MCF 10A (cell line): ENCODE measurements at regions of chr14 and their contacts with region 1.

Region 1: DNA sequence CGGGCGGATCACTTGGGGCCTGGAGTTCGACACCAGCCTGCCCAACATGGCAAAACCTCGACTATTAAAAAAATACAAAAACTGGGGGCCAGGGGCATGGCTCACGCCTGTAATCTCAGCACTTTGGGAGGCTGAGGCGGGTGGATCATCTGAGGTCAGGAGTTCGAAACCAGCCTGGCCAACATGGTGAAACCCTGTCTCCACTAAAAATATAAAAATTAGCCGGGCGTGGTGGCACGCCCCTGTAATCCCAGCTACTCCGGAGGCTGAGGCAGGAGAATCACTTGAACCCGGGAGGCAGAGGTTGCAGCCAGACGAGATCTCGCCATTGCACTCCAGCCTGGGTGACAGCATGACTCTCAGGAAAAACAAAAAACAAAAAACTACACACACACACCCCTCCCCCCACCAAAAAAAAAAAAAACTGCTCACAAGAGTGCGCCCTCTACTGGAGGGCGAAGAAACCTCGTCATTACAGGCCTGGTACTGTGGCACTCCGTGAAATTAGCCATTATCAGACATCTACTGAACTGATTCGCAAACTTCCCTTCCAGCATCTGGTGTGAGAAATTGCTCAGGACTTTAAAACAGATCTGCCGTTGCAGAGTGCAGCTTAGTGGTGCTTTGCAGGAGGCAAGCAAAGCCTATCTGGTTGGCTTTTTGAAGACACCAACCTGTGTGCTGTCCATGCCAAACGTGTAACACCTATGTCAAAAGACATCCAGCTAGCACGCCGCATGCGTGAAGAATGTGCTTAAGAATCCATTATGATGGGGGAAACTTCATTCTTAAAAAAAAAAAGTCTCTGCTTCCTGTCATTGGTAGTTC is 7.7 kb downstream of the PPP1R3E start:
- DNase-seq: peak; percentile 63
- H3K4me3 Mint-ChIP-seq: no peak overlapping the region
- H3K27ac Mint-ChIP-seq: no peak overlapping the region
- H3K4me1 Mint-ChIP-seq: peaks cover 17% of the 10 kb centered on the region
- H3K27me3 Mint-ChIP-seq: no peaks in the 10 kb centered on the region
- CTCF ChIP-seq: peak; percentile 72

Region 2: DNA sequence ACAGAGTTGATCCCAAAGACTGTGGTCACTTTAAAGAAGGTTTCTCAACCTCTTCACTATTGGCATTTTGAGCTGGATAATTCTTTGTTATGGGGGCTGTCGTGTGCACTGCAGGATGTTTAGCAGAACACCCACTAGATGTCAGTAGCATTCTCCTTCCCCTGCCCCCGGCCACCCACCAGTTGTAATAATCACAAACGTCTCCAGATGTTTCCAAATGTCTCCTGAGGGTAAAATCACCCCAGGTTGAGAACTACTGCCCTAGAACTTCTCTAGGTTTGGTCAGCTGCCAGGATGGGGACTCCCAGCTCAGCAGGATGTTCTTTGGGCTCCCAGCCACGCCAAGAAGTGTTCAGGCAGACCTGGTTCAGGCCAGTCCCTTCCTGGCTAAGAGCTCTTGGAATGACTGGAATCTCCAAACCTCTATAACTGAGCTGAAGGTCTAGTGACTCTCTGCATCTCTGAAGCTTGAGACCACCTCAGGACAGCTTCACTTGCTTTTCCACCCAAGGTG is 300.1 kb before region 1 on chr14:
- CTCF ChIA-PET with region 1: no interaction called
- POLR2A ChIA-PET with region 1: no interaction called
- intact Hi-C with region 1: no loop called
- DNase-seq: peak; percentile 84
- H3K4me3 Mint-ChIP-seq: no peak overlapping the region
- H3K27ac Mint-ChIP-seq: no peak overlapping the region
- H3K4me1 Mint-ChIP-seq: peaks cover 16% of the 10 kb centered on the region
- H3K27me3 Mint-ChIP-seq: no peaks in the 10 kb centered on the region
- CTCF ChIP-seq: peak; percentile 44

Region 3: GRCh38 chr14:23034483-23035302 is 260.3 kb before region 1 on chr14 and contains the start of gene PSMB5:
- CTCF ChIA-PET with region 1: no interaction called
- POLR2A ChIA-PET with region 1: no interaction called
- intact Hi-C with region 1: no loop called
- DNase-seq: peak; percentile 96
- H3K4me3 Mint-ChIP-seq: peak within 1 kb of the TSS; percentile 92
- H3K27ac Mint-ChIP-seq: peak within 1 kb of the TSS; percentile 99
- H3K4me1 Mint-ChIP-seq: peaks cover 8% of the 10 kb centered on the region
- H3K27me3 Mint-ChIP-seq: no peaks in the 10 kb centered on the region
- CTCF ChIP-seq: no peak
- total RNA-seq, gene PSMB5: 162 and 173 TPM in 2 replicates

Region 4: GRCh38 chr14:23258256-23258655 is 36.7 kb before region 1 on chr14:
- CTCF ChIA-PET with region 1: interaction called, 32 read pairs
- POLR2A ChIA-PET with region 1: interaction called, 16 read pairs
- intact Hi-C with region 1: no loop called
- DNase-seq: no peak
- H3K4me3 Mint-ChIP-seq: no peak overlapping the region
- H3K27ac Mint-ChIP-seq: no peak overlapping the region
- H3K4me1 Mint-ChIP-seq: no peaks in the 10 kb centered on the region
- H3K27me3 Mint-ChIP-seq: peaks cover 9% of the 10 kb centered on the region
- CTCF ChIP-seq: no peak

Region 5: GRCh38 chr14:23269193-23269592 is 25.8 kb before region 1 on chr14:
- CTCF ChIA-PET with region 1: interaction called, 32 read pairs
- POLR2A ChIA-PET with region 1: interaction called, 16 read pairs
- intact Hi-C with region 1: loop called (anchors 1 kb)
- DNase-seq: no peak
- H3K4me3 Mint-ChIP-seq: no peak overlapping the region
- H3K27ac Mint-ChIP-seq: no peak overlapping the region
- H3K4me1 Mint-ChIP-seq: no peaks in the 10 kb centered on the region
- H3K27me3 Mint-ChIP-seq: no peaks in the 10 kb centered on the region
- CTCF ChIP-seq: no peak

Region 6: GRCh38 chr14:23275412-23275811 is 19.5 kb before region 1 on chr14:
- CTCF ChIA-PET with region 1: interaction called, 23 read pairs
- POLR2A ChIA-PET with region 1: interaction called, 5 read pairs
- intact Hi-C with region 1: no loop called
- DNase-seq: no peak
- H3K4me3 Mint-ChIP-seq: no peak overlapping the region
- H3K27ac Mint-ChIP-seq: no peak overlapping the region
- H3K4me1 Mint-ChIP-seq: no peaks in the 10 kb centered on the region
- H3K27me3 Mint-ChIP-seq: no peaks in the 10 kb centered on the region
- CTCF ChIP-seq: no peak

Region 7: DNA sequence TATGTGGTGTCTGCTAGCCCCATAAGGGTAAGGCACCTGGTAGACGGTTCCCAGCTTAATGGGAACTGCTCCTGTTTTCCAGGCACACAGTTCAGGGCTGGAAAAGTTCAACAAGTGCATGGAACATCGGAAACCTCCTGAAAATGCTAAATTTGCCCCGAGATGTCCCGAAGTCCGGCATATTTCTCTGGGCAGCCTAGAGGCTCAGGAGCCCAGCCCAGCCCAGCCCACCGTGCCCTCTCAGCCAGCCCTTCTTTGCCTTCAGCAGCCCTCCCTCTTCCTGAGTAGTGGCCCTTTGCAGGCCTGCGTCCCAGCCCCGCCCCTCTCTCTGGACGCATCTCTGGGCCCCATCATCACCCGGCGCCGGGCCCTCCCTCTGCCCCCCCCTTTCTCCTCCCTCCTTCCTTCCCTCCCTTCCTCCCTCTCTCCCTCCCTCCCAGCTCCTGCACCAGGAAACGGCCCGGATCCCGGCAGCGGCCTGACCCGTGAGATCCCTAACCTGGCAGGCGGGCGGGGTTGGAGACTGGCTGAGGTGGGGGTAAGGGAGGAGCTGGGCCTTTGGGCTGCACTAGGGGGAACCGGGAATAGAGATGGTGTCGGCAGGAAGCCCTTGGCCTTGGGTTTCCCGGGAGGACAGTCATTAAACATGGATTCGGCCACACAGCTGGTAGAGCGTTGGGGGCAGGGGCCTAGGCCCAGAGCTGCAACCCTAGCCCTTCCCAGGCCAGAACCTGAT is 11.6 kb after region 1 on chr14 and contains the start of gene BCL2L2:
- CTCF ChIA-PET with region 1: interaction called, 24 read pairs
- POLR2A ChIA-PET with region 1: interaction called, 27 read pairs
- intact Hi-C with region 1: no loop called
- DNase-seq: peak; percentile 92
- H3K4me3 Mint-ChIP-seq: peak within 1 kb of the TSS; percentile 98
- H3K27ac Mint-ChIP-seq: peak within 1 kb of the TSS; percentile 88
- H3K4me1 Mint-ChIP-seq: peaks cover 26% of the 10 kb centered on the region
- H3K27me3 Mint-ChIP-seq: no peaks in the 10 kb centered on the region
- CTCF ChIP-seq: no peak
- total RNA-seq, gene BCL2L2: 41.2 and 42.5 TPM in 2 replicates

Region 8: DNA sequence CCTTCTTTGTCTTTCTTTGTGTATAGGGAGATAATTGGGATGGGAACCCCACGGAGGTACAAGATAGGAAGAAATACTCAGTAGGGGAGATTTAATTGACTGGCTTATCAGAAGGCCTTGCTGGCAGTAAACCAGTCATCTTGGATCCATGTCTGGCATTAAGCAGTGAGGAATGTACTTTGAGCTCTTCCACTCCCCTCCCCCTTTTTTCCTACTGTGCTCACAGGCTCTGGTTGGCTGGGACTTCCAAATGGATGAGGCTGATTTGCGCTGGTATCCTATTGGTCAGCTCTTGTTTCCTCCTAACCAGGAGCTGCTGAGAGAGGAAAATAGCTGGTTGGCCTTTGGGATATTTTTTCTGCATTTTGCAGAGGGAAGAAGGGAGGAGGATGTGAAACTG is 199.3 kb after region 1 on chr14:
- CTCF ChIA-PET with region 1: no interaction called
- POLR2A ChIA-PET with region 1: no interaction called
- intact Hi-C with region 1: no loop called
- DNase-seq: no peak
- H3K4me3 Mint-ChIP-seq: no peak overlapping the region
- H3K27ac Mint-ChIP-seq: no peak overlapping the region
- H3K4me1 Mint-ChIP-seq: no peaks in the 10 kb centered on the region
- H3K27me3 Mint-ChIP-seq: no peaks in the 10 kb centered on the region
- CTCF ChIP-seq: no peak

Region 9: GRCh38 chr14:23528555-23528954 is 233.6 kb after region 1 on chr14:
- CTCF ChIA-PET with region 1: no interaction called
- POLR2A ChIA-PET with region 1: no interaction called
- intact Hi-C with region 1: no loop called
- DNase-seq: no peak
- H3K4me3 Mint-ChIP-seq: no peak overlapping the region
- H3K27ac Mint-ChIP-seq: no peak overlapping the region
- H3K4me1 Mint-ChIP-seq: no peaks in the 10 kb centered on the region
- H3K27me3 Mint-ChIP-seq: no peaks in the 10 kb centered on the region
- CTCF ChIP-seq: peak; percentile 7